Activated CD4-positive, alpha-beta memory T cell treated with anti-CD3 and anti-CD28 coated beads for 36 hours (primary cell): ENCODE measurements at regions of chr6 and their contacts with region 1.

Region 1: GRCh38 chr6:30396833-30397479 is 52.0 kb downstream of the RPP21 start:
- DNase-seq: peak; percentile 90
- H3K4me3 Mint-ChIP-seq: no peak overlapping the region
- H3K27ac Mint-ChIP-seq: no peak overlapping the region
- H3K4me1 Mint-ChIP-seq: no peaks in the 10 kb centered on the region
- H3K27me3 Mint-ChIP-seq: peaks cover 24% of the 10 kb centered on the region

Region 2: DNA sequence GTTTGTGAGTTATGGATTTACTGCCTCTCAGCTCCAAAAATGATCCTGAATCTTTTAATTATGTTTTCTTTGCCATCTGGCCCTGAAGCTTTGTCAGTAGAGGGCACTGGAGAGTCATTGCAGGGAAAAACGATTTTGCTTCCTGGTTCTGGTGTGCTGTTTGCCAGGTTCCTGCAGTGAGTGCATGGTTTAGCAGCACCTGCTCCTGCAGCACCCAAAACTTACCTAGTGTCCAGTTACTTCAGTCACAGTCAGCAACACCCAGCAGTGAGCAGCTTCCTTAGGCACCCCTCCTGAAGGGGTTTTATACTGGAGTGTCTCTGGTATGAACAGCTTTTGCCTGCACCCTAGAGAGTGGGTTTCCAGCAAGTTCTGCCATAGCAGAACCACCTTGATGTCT is 177.7 kb before region 1 on chr6:
- CTCF ChIA-PET with region 1: interaction called, 40 read pairs
- POLR2A ChIA-PET with region 1: no interaction called
- intact Hi-C with region 1: loop called (anchors 2 kb)
- DNase-seq: peak; percentile 60
- H3K4me3 Mint-ChIP-seq: no peak overlapping the region
- H3K27ac Mint-ChIP-seq: no peak overlapping the region
- H3K4me1 Mint-ChIP-seq: peaks cover 17% of the 10 kb centered on the region
- H3K27me3 Mint-ChIP-seq: no peaks in the 10 kb centered on the region

Region 3: DNA sequence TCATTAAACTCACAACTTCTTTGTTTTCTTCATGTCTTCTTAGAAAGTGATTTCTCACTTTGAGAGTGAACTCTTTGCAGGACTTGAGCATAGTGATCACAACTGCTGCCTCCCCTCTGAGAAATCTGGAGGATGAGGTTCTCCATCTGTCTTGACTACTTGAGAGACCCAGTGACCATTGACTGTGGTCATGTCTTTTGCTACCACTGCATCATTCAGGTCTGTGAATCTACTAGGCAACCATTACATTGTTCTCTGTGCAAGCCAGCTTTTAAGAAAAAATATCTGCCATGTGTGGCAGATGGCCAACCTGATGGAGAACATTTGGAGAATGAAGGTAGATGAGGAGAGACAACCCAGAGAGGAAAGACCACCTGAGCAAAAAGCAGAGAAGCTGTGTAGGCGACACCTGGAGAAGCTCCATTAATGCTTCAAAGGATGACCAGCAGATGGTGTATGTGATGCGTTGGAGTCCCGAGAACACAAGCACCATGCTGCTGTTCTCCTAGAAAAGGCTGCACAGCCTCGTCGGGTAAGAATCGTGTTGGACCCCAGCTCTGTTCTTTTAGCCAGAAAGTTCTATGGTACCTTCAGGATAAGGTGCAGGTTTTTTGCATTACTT is 158.7 kb before region 1 on chr6:
- CTCF ChIA-PET with region 1: interaction called, 31 read pairs
- POLR2A ChIA-PET with region 1: no interaction called
- intact Hi-C with region 1: loop called (anchors 2 kb)
- DNase-seq: peak; percentile 40
- H3K4me3 Mint-ChIP-seq: no peak overlapping the region
- H3K27ac Mint-ChIP-seq: no peak overlapping the region
- H3K4me1 Mint-ChIP-seq: no peaks in the 10 kb centered on the region
- H3K27me3 Mint-ChIP-seq: peaks cover 21% of the 10 kb centered on the region

Region 4: DNA sequence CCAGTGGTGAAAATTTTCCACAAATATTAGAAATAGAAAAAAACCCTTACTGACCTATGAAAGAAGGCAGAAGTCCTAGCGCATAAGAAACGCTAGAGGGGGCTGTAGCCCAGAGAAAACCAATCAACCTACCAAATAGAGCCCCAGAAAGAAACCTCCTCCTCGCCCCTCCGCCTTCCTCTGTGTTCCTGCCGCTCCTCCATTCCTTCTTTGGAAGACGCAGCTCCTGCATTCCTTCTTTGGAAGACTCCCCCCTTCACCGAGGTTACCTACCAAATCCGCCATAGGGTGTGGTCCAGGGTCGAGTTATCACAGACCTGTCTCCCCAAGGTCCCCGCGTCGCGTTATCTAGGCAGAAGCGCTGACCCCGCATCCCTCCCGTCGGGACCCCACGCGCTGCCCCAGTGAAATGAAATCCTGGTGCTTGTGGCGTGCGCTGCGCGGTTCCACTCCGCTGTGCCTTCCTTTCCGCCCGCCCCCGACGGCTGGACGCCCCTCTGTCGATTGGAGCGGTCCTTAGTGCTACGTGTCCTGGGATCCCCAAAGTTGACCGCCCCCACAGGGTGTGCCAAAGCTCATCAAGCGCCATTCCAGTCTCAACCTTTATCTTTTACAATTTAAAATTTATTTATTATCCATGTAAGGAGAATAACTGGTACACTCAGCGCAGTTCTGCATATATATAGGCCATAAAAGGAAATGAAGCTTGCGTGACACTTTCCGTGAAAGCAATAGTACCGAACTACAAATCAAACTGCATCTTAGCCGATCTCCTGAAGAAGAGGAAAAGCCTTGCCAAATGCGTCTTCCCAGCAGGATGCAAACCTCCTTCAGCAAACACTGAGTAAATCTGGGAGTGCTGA is 39.0 kb before region 1 on chr6:
- CTCF ChIA-PET with region 1: interaction called, 29 read pairs
- POLR2A ChIA-PET with region 1: no interaction called
- intact Hi-C with region 1: loop called (anchors 1 kb)
- DNase-seq: peak; percentile 63
- H3K4me3 Mint-ChIP-seq: peak overlapping the region; percentile 63
- H3K27ac Mint-ChIP-seq: no peak overlapping the region
- H3K4me1 Mint-ChIP-seq: peaks cover 4% of the 10 kb centered on the region
- H3K27me3 Mint-ChIP-seq: peaks cover 46% of the 10 kb centered on the region

Region 5: DNA sequence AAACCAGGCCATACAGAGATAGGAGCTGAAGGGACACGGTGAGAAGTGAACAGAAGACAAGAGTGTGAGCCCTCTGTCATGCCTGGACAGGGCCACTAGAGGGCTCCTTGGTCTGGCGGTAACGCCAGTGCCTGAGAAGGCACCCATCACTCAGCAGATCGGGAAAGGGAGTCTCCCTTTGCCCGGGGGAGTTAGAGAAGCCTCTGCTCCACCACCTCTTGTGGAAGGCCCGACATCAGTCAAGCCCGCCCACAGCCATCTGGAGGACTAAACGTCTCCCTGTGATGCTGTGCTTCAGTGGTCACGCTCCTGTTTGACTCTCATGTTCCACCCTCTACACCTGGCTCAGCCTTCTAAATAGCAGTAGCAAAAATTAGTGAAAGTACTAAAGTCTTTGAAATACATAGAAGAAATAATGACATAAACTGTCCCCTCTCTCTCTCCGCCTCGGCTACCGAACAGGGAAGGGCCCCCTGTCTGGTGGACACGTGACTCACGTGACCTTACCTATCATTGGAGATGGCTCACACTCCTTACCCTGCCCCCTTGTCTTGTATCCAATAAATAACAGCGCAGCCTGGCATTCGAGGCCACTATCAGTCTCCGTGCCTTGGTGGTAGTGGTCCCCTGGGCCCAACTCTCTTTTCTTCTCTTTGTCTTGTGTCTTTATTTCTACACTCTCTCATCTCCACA is 14.7 kb after region 1 on chr6:
- CTCF ChIA-PET with region 1: interaction called, 10 read pairs
- POLR2A ChIA-PET with region 1: no interaction called
- intact Hi-C with region 1: no loop called
- DNase-seq: peak; percentile 72
- H3K4me3 Mint-ChIP-seq: peak overlapping the region; percentile 25
- H3K27ac Mint-ChIP-seq: no peak overlapping the region
- H3K4me1 Mint-ChIP-seq: peaks cover 7% of the 10 kb centered on the region
- H3K27me3 Mint-ChIP-seq: peaks cover 53% of the 10 kb centered on the region